Dendritic cell treated with granulocyte-macrophage colony-stimulating factor and Interleukin-4, amounts not matched to agents 40 ng/mL and 50 ng/mL, for 4 days (primary cell): ENCODE measurements at regions of chr1 and their contacts with region 1.

Region 1: GRCh38 chr1:174769961-174770549 is 229.7 kb upstream of the CACYBP start:
- H3K4me3 Mint-ChIP-seq: no peak overlapping the region
- H3K27ac Mint-ChIP-seq: no peak overlapping the region
- H3K4me1 Mint-ChIP-seq: no peaks in the 10 kb centered on the region
- H3K27me3 Mint-ChIP-seq: no peaks in the 10 kb centered on the region

Region 2: GRCh38 chr1:174682419-174683008 is 87.5 kb before region 1 on chr1:
- intact Hi-C with region 1: no loop called
- H3K4me3 Mint-ChIP-seq: no peak overlapping the region
- H3K27ac Mint-ChIP-seq: no peak overlapping the region
- H3K4me1 Mint-ChIP-seq: no peaks in the 10 kb centered on the region
- H3K27me3 Mint-ChIP-seq: no peaks in the 10 kb centered on the region

Region 3: GRCh38 chr1:174982971-174983689 is 213.1 kb after region 1 on chr1:
- intact Hi-C with region 1: loop called (anchors 1 kb)
- H3K4me3 Mint-ChIP-seq: no peak overlapping the region
- H3K27ac Mint-ChIP-seq: no peak overlapping the region
- H3K4me1 Mint-ChIP-seq: peaks cover 6% of the 10 kb centered on the region
- H3K27me3 Mint-ChIP-seq: no peaks in the 10 kb centered on the region

Region 4: DNA sequence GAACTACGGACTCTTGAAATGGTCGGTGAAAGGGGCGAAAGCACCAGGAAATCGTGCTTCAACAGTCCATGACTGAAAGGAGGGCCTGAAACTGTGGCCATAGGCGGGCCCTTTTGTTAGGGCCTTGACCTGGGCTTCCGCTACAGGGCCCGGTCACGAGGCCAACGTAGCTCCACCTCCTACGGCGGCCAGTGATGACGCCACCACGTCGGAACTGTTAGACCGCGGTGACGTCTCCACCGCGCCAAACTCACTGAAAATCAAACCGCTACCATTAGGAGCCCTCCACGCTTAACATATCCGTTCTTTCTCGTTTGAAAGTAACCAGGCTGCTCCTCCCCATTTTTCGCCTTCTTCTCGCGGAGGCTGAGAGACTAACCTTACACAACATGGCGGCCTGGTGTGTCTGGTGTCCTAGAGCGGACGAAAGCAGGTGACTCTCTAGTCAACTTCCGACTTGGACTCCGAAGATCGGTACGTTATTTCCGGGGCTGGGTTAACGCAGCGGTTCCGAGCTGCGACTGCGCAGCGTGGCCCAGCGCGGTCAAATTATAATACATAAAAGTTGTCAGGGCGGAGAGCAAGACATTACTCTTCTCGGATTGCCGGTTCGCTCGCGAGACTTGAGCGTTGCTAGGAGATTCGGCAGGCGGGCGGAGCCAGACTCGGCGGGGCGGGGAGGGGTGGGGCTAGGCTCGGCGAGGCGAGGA is 229.3 kb after region 1 on chr1:
- intact Hi-C with region 1: loop called (anchors 2 kb)
- H3K4me3 Mint-ChIP-seq: no peak overlapping the region
- H3K27ac Mint-ChIP-seq: no peak overlapping the region
- H3K4me1 Mint-ChIP-seq: peaks cover 37% of the 10 kb centered on the region
- H3K27me3 Mint-ChIP-seq: no peaks in the 10 kb centered on the region